Activated CD4-positive, alpha-beta T cell treated with anti-CD3 and anti-CD28 coated beads for 36 hours (primary cell): ENCODE measurements at regions of chr7 and their contacts with region 1.

Region 1: GRCh38 chr7:86932038-86932512 is 127.4 kb downstream of the ELAPOR2 start:
- DNase-seq: peak; percentile 32
- ATAC-seq: peak; percentile 52
- H3K4me3 Mint-ChIP-seq: no peak overlapping the region
- H3K27ac Mint-ChIP-seq: peak overlapping the region; percentile 44
- H3K4me1 Mint-ChIP-seq: peaks cover 13% of the 10 kb centered on the region
- H3K27me3 Mint-ChIP-seq: peaks cover 5% of the 10 kb centered on the region

Region 2: DNA sequence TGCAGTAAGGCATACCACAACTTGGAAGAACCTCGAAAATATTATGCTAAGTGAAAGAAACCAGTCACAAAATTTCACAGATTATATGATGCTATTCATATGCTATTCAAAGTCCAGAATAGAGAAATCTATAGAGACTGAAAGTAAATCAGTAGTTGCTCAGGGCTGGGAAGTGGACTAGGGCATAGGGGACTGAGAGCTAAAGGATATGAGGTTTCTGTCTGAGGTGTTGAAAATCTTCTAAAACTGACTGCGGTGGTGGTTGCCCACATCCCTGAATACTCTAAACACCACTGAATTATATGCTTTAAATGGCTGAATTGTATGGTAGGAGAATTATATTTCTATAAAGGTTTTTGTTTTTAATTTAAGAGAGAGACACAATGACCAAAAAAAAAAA is 33.9 kb before region 1 on chr7:
- CTCF ChIA-PET with region 1: no interaction called
- POLR2A ChIA-PET with region 1: no interaction called
- intact Hi-C with region 1: no loop called
- DNase-seq: no peak
- ATAC-seq: no peak
- H3K4me3 Mint-ChIP-seq: no peak overlapping the region
- H3K27ac Mint-ChIP-seq: no peak overlapping the region
- H3K4me1 Mint-ChIP-seq: no peaks in the 10 kb centered on the region
- H3K27me3 Mint-ChIP-seq: no peaks in the 10 kb centered on the region

Region 3: DNA sequence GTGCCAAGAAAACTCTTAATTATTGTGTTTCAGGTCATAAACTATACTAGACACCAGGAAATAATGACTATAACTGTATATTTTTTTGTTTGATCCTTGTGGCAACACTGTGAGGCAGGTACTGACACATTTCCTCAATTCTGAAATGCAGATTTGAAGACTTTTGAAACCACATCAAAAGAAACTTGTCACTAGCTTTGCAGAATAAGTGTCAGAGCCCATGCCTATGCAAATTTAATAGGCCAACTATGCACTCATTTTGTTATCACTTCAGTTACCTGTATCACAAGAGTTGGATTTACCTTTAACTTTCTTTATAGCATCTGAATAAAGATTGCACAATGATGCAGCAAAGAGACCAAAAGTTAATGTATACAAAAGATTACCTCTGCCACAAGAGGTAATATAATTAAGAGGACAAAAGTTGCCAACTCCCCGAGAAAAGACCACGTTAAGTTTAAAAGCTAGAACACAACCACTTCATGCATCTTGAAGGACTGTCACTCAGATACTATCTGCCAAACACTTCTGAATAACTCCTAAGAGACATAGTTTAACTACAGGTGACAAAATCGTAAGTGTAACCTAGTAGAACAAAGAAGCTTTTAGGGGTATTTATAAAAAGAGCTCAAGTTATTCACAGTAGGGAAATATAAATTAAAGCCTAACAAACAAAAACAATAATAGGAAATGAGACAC is 46.9 kb after region 1 on chr7:
- CTCF ChIA-PET with region 1: interaction called, 3 read pairs
- POLR2A ChIA-PET with region 1: no interaction called
- intact Hi-C with region 1: loop called (anchors 1 kb)
- DNase-seq: no peak
- ATAC-seq: peak; percentile 92
- H3K4me3 Mint-ChIP-seq: no peak overlapping the region
- H3K27ac Mint-ChIP-seq: peak overlapping the region; percentile 40
- H3K4me1 Mint-ChIP-seq: peaks cover 42% of the 10 kb centered on the region
- H3K27me3 Mint-ChIP-seq: no peaks in the 10 kb centered on the region

Region 4: GRCh38 chr7:87339373-87339897 is 407.4 kb after region 1 on chr7:
- CTCF ChIA-PET with region 1: no interaction called
- POLR2A ChIA-PET with region 1: no interaction called
- intact Hi-C with region 1: no loop called
- DNase-seq: no peak
- ATAC-seq: no peak
- H3K4me3 Mint-ChIP-seq: no peak overlapping the region
- H3K27ac Mint-ChIP-seq: no peak overlapping the region
- H3K4me1 Mint-ChIP-seq: peaks cover 33% of the 10 kb centered on the region
- H3K27me3 Mint-ChIP-seq: no peaks in the 10 kb centered on the region